ENCODE measurements at regions of chr3 and their contacts with region 1.

Region 1: DNA sequence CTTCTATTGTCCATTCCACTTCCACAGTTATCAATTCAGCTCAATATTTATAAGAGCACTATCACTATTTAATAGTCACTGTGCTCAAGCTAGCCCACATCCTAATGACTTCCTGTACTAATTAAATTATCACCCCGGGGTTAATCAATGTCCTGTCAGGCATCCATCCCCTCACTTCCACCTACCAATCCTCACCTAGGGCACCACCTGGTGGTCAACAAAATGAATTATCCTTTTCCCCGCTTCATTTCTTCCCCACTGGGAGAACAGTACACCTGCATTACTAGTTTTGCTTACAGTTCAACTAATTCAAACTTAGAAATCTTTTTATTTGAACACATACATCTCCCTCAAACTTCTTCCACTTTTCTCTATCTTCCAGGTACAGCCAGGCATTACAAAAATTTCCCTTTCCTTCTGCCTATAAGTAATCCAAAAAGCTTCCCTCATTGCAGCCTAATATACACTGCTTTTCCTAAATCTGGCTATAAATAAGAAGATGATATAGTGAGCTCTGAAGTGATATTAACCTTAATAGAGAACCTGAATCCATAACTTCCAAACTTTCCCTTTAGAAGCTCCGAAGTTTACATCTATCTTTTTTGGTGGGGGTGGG is 68.5 kb downstream of the TMCC1 start:
- DNase-seq: peak; percentile 19
- H3K4me3 Mint-ChIP-seq: no peak overlapping the region
- H3K27ac Mint-ChIP-seq: no peak overlapping the region
- H3K4me1 Mint-ChIP-seq: peaks cover 20% of the 10 kb centered on the region
- H3K27me3 Mint-ChIP-seq: no peaks in the 10 kb centered on the region

Region 2: DNA sequence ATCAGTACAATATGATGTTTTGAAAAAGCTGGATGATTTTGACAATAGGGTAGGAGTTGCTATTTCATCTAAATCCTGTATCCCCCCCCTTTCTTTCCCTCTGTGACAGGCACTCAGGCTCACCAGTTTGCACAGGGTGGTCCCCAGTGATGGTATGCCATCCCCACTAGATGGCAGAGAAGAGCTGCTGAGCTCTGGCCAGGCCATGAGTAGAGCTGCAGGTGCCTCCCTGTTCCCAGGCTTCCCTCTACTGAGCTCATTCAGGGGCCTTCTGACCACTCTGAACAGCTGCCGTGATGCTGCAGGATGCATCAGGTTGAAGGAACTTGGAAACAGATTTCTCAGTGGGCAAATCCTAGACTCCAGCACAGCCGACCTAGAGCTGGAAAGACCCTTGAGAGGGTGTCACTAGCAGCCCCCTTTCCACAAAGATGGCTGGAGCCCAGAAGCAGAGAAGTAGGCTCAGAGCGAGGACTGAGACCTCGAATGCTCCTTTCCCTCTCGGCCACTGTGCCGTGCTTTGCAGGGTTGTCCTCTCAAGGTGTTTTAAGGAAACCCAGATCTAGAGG is 441.7 kb before region 1 on chr3:
- intact Hi-C with region 1: loop called (anchors 10 kb)
- DNase-seq: peak; percentile 8
- H3K4me3 Mint-ChIP-seq: no peak overlapping the region
- H3K27ac Mint-ChIP-seq: no peak overlapping the region
- H3K4me1 Mint-ChIP-seq: no peaks in the 10 kb centered on the region
- H3K27me3 Mint-ChIP-seq: no peaks in the 10 kb centered on the region

Region 3: DNA sequence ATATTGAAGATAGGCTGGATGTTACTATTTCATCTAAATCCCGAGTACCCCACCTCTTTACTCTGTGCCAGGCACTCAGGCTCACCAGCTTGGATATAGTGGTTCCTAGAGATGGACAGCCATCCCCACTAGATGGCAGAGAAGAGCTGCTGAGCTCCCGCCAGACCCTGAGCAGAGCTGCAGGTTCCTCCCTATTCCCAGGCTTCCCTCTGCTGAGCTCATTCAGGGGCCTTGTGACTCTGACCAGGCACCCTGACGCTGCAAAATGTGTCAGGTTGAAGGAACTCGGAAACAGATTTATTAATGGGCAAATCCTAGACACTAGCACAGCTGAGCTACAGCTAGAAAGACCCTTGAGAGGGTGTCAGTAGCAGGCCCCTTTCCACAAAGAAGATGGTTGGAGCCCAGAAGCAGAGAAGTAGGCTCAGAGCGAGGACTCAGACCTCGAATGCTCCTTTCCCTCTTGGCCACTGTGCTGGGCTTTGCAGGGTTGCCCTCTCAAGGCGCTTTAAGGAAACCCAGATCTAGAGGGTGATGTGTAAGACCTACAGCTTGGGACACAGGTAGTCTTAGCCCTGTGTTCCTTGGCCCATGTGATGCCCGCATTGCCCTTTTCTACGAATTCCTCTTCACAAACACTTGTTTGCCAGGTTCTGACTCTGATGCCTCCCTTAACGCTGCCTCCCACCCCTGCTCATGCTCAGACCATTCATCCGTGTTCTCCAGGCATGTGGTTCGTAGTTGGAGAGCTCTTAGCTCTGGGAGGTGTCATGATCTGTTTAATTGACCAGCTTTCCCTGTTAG is 334.6 kb before region 1 on chr3:
- intact Hi-C with region 1: loop called (anchors 1 kb)
- DNase-seq: peak; percentile 19
- H3K4me3 Mint-ChIP-seq: no peak overlapping the region
- H3K27ac Mint-ChIP-seq: no peak overlapping the region
- H3K4me1 Mint-ChIP-seq: no peaks in the 10 kb centered on the region
- H3K27me3 Mint-ChIP-seq: no peaks in the 10 kb centered on the region

Region 4: GRCh38 chr3:129650256-129650872 is 174.7 kb before region 1 on chr3:
- intact Hi-C with region 1: loop called (anchors 1 kb)
- DNase-seq: peak; percentile 20
- H3K4me3 Mint-ChIP-seq: no peak overlapping the region
- H3K27ac Mint-ChIP-seq: no peak overlapping the region
- H3K4me1 Mint-ChIP-seq: peaks cover 5% of the 10 kb centered on the region
- H3K27me3 Mint-ChIP-seq: peaks cover 5% of the 10 kb centered on the region

Measured in activated T-helper 1 cell treated with anti-CD3 and anti-CD28 coated beads, Interleukin-12 subunit alpha, Interleukin-12 subunit beta, Interleukin-2, Interleukin-4 antibody, amounts not matched to agents 30 ng/mL and 10 ng/mL and 1 ng/mL, durations not matched to agents 14 hours and 24 hours and 36 hours (primary cell).